ENCODE measurements at regions of chr14 and their contacts with region 1.

Region 1: GRCh38 chr14:20989572-20990551 is at the start of gene METTL17:
- DNase-seq: peak; percentile 82 to 90 (median 85)
- H3K4me3 ChIP-seq: peak within 1 kb of the TSS; percentile 79 to 93
- H3K4me3 Mint-ChIP-seq: peak within 1 kb of the TSS; percentile 90 to 97 (median 96)
- H3K27ac ChIP-seq: peak within 1 kb of the TSS; percentile 73
- H3K27ac Mint-ChIP-seq: peak within 1 kb of the TSS; percentile 87 to 98 (median 96)
- H3K4me1 ChIP-seq: peaks cover 24% of the 10 kb centered on the region
- H3K4me1 Mint-ChIP-seq: peaks cover 15 to 39% (median 22%) of the 10 kb centered on the region in 4 donors
- H3K27me3 ChIP-seq: no peaks in the 10 kb centered on the region
- H3K27me3 Mint-ChIP-seq: no peaks in the 10 kb centered on the region
- total RNA-seq, gene METTL17: 119 to 125 TPM

Region 2: DNA sequence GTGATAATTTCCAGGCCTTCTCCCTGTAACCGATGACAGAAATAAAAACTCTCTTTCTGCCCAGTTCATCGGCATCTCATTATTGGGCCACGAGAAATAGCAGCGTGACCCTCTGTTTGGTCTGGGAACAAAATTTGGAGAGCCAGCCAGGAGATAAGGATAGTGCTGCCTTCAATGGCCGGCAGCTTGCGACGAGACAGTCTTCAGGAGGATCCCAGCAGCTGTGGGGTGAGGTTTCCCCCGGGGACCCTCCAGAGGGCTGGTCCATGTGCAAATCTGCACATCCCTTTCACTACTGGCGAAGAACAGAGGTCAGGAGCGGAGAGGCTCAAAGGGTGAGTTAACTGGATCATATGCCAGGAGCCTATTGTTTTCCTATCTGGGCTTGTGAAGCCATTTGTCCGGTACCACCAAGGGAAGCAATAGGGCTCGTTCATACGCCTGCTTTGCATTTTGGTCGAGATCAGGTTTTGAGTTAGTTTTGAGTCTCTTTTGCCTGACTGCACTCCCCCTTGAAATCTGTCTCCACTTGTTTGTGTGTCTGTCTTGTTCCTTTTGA is 14.0 kb after region 1 on chr14:
- CTCF ChIA-PET with region 1: interaction called, 10 read pairs
- POLR2A ChIA-PET with region 1: no interaction called
- intact Hi-C with region 1: no loop called
- DNase-seq: no peak
- H3K4me3 ChIP-seq: no peak overlapping the region
- H3K4me3 Mint-ChIP-seq: no peak overlapping the region
- H3K27ac ChIP-seq: no peak overlapping the region
- H3K27ac Mint-ChIP-seq: no peak overlapping the region
- H3K4me1 ChIP-seq: no peaks in the 10 kb centered on the region
- H3K4me1 Mint-ChIP-seq: no peaks in the 10 kb centered on the region
- H3K27me3 ChIP-seq: no peaks in the 10 kb centered on the region
- H3K27me3 Mint-ChIP-seq: no peaks in the 10 kb centered on the region

Measured in CD4-positive, alpha-beta memory T cell (primary cell).